MCF 10A (cell line): ENCODE measurements at regions of chr12 and their contacts with region 1.

Region 1: GRCh38 chr12:56315622-56316473 is at the start of gene CNPY2:
- DNase-seq: peak; percentile 99
- H3K4me3 Mint-ChIP-seq: peak within 1 kb of the TSS; percentile 96
- H3K27ac Mint-ChIP-seq: peak within 1 kb of the TSS; percentile 98
- H3K4me1 Mint-ChIP-seq: no peaks in the 10 kb centered on the region
- H3K27me3 Mint-ChIP-seq: no peaks in the 10 kb centered on the region
- CTCF ChIP-seq: no peak
- total RNA-seq, gene CNPY2: 169 and 210 TPM in 2 replicates

Region 2: DNA sequence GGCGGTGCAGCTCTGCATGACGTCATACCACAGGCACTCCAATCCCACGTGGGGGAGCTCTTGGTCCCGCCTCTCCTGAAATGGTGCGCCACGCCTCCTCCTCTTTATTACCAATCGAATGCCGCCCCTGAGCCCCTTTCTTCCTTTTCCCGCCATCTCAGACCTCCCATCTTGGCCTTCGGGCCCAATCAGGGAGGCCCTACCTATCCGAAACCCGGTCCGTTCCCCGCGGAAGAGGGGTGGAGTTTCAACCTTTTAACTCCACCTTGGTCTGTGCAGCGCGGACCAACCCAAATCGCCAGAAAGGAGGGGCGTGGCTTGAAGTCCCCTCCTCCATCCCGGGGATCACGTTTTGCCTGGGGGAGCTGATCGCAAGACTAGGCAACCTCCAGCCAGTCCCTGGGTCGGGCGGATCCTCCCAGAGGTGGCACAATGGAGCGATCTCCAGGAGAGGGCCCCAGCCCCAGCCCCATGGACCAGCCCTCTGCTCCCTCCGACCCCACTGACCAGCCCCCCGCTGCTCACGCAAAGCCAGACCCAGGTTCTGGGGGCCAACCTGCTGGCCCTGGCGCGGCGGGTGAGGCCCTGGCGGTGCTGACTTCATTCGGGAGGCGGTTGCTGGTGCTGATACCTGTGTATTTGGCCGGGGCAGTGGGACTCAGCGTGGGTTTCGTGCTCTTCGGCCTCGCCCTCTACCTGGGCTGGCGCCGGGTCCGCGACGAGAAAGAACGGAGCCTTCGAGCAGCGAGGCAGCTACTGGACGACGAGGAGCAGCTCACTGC is 187.8 kb before region 1 on chr12 and contains the start of gene ESYT1:
- CTCF ChIA-PET with region 1: interaction called, 3 read pairs
- POLR2A ChIA-PET with region 1: interaction called, 10 read pairs
- intact Hi-C with region 1: no loop called
- DNase-seq: peak; percentile 100
- H3K4me3 Mint-ChIP-seq: peak within 1 kb of the TSS; percentile 84
- H3K27ac Mint-ChIP-seq: peak within 1 kb of the TSS; percentile 84
- H3K4me1 Mint-ChIP-seq: peaks cover 26% of the 10 kb centered on the region
- H3K27me3 Mint-ChIP-seq: no peaks in the 10 kb centered on the region
- CTCF ChIP-seq: no peak
- total RNA-seq, gene ESYT1: 111 and 123 TPM in 2 replicates

Region 3: DNA sequence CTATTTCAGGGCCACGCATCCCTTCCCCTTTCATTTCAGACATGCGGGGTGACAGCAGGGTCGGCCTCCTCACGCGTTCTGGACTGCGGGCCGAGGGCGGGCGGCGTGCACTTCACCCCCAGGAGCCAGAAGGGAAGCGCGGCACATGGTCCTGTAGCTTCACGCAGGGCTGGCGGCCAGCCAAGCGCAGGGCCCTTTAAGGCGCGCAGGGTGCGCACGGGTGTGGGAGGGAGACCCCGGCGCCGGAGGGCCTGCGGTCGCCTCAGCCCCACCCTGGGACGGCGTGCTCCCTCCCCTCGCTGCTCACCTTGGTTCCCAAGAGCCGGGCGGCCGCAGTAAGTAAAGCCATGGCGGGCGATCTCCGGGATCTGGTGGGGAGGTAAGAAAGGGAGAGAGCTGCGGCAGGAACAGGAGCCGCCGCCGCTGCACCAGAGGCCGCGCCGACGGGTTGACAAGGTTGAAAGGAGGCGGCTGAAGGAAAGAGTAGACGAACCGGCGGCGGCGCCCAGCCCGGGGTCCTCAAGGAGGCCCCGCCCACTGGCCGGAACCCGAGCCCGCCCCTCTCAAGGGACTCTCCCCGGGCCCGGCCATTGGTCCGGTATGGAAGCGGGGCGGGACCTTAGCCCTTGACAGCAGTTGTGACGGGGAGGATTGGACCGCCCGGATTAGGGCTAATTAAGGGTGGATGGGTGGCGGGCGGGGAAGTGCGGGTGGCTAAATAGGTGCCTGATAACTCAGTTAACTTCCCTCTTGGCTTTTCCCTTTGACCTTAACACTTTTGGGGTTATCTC is 15.8 kb before region 1 on chr12 and contains the start of gene CS:
- CTCF ChIA-PET with region 1: no interaction called
- POLR2A ChIA-PET with region 1: interaction called, 7 read pairs
- intact Hi-C with region 1: loop called (anchors 1 kb)
- DNase-seq: peak; percentile 99
- H3K4me3 Mint-ChIP-seq: peak within 1 kb of the TSS; percentile 95
- H3K27ac Mint-ChIP-seq: peak within 1 kb of the TSS; percentile 84
- H3K4me1 Mint-ChIP-seq: peaks cover 19% of the 10 kb centered on the region
- H3K27me3 Mint-ChIP-seq: no peaks in the 10 kb centered on the region
- CTCF ChIP-seq: no peak
- total RNA-seq, gene CS: 213 and 257 TPM in 2 replicates

Region 4: GRCh38 chr12:56333679-56334489 is 18.0 kb after region 1 on chr12 and contains the start of gene PAN2:
- CTCF ChIA-PET with region 1: interaction called, 5 read pairs
- POLR2A ChIA-PET with region 1: interaction called, 79 read pairs
- intact Hi-C with region 1: no loop called
- DNase-seq: peak; percentile 99
- H3K4me3 Mint-ChIP-seq: peak within 1 kb of the TSS; percentile 83
- H3K27ac Mint-ChIP-seq: peak within 1 kb of the TSS; percentile 98
- H3K4me1 Mint-ChIP-seq: peaks cover 21% of the 10 kb centered on the region
- H3K27me3 Mint-ChIP-seq: no peaks in the 10 kb centered on the region
- CTCF ChIP-seq: peak; percentile 60
- total RNA-seq, gene PAN2: 72.9 and 80.1 TPM in 2 replicates

Region 5: DNA sequence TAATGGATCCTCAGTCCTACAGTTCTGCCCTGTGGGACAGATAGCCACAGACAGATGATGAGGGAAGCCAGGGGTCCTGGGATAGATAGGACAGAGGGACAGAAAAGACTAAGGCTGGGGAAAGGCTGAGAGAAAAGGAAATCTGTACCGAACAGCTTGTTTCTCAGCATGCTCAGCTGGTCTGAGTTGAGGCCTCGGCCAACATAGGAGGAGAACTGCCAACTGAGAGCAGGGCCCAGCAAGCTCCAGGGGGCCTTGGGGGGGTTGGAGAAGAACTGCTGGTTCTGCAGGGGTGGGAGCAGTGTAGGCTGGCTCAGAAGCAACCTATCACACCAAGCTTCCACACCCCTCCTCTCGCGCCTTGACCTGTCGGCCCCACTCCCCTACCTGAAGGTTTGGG is 32.9 kb after region 1 on chr12:
- CTCF ChIA-PET with region 1: no interaction called
- POLR2A ChIA-PET with region 1: no interaction called
- intact Hi-C with region 1: no loop called
- DNase-seq: no peak
- H3K4me3 Mint-ChIP-seq: no peak overlapping the region
- H3K27ac Mint-ChIP-seq: no peak overlapping the region
- H3K4me1 Mint-ChIP-seq: no peaks in the 10 kb centered on the region
- H3K27me3 Mint-ChIP-seq: no peaks in the 10 kb centered on the region
- CTCF ChIP-seq: no peak

Region 6: DNA sequence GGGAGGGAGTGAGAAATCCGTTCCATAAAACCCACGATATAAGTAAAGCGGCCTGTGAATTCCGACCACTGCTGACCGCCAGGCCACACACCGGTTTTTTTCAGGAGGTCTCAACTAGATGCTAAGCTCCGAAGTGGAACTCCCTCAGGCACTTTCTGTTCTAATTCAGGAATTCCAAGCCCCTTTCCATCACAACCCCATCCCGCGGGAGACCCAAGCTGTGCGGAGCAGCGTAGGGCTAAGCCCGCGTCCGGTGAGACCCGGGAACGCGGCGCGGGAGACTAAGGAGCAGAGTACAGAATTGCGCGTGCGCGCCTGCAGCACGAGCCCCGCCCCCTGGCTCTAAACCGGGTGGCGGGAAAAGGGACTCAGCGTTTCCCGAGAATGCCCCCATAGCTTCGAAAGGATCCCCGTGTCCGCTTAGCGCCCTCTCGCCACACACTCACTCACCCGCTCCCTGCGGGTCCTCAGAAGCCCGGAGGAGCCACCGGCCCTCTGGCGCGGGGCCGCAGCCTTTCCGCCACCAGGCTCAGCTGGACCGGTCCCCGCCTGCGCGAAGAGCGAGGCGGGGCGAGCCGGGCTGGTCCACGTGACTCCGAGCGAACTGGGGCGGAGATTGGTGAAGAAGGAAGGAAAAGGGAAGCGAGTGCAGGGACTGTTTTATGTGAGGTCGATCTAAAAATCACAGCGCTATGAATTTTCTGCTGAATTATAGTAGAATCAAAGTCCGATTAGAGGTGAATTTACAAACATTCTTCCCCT is 133.2 kb after region 1 on chr12 and contains the start of gene TIMELESS:
- CTCF ChIA-PET with region 1: no interaction called
- POLR2A ChIA-PET with region 1: interaction called, 16 read pairs
- intact Hi-C with region 1: no loop called
- DNase-seq: peak; percentile 90
- H3K4me3 Mint-ChIP-seq: peak within 1 kb of the TSS; percentile 76
- H3K27ac Mint-ChIP-seq: peak within 1 kb of the TSS; percentile 90
- H3K4me1 Mint-ChIP-seq: peaks cover 8% of the 10 kb centered on the region
- H3K27me3 Mint-ChIP-seq: no peaks in the 10 kb centered on the region
- CTCF ChIP-seq: no peak
- total RNA-seq, gene TIMELESS: 10.1 and 14.0 TPM in 2 replicates